ENCODE measurements at regions of chr12 and their contacts with region 1.

Region 1: DNA sequence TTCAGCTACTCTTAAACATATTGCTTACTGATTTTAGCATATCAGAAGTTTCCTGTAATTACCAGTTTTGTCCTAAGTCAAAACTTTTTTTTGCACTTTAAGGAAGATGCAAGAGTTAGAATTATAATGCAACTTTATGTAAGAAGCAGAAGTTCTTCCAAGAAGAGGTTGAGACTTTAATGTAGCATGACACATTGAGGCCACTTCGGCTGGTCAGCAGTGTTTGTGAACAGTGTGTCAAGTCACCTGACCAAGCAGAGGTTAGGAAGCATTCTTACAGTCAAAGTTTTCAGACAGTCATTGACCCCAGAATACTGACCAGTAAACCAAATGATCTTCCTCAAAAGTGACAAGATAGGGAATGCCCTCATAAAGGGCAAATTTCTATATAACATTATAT is 15.2 kb downstream of the FGFR1OP2 start:
- DNase-seq: no peak
- ATAC-seq: peak in 4 of 8 donors; percentile 34 to 75 (median 57)
- H3K4me3 ChIP-seq: no peak overlapping the region
- H3K27ac ChIP-seq: peak overlapping the region in 1 of 10 donors; percentile 75
- H3K4me1 ChIP-seq: peaks cover 0 to 37% (median 13%) of the 10 kb centered on the region in 9 donors
- H3K27me3 ChIP-seq: no peaks in the 10 kb centered on the region
- CTCF ChIP-seq: no peak

Region 2: DNA sequence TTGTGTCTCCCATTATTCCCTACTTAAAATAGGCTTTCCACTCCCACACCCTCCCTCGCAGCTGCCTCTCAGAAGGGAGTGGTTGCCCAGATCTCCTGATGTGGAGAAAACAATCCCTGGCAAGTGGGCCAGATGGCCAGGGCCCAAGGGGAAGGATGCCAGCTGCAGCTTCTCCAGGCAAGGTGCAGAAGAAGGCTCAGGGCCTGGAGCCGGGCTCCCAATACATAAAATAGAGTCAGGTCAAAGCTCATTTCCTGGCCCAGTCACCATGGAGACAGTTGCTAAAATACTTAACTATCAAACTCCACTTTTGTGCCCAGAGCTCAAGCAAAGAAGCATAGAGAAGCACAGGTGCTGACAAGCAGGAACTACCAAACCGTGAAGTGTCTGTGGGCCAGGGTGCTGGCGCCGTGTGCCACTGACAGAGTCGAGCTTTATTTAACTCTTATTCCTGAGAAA is 74.8 kb before region 1 on chr12:
- intact Hi-C with region 1: no loop called
- DNase-seq: peak; percentile 84 to 85
- ATAC-seq: peak; percentile 90 to 96 (median 94)
- H3K4me3 ChIP-seq: no peak overlapping the region
- H3K27ac ChIP-seq: peak overlapping the region in 7 of 10 donors; percentile 32 to 77 (median 64)
- H3K4me1 ChIP-seq: peaks cover 0 to 35% (median 23%) of the 10 kb centered on the region in 9 donors
- H3K27me3 ChIP-seq: no peaks in the 10 kb centered on the region
- CTCF ChIP-seq: no peak

Region 3: DNA sequence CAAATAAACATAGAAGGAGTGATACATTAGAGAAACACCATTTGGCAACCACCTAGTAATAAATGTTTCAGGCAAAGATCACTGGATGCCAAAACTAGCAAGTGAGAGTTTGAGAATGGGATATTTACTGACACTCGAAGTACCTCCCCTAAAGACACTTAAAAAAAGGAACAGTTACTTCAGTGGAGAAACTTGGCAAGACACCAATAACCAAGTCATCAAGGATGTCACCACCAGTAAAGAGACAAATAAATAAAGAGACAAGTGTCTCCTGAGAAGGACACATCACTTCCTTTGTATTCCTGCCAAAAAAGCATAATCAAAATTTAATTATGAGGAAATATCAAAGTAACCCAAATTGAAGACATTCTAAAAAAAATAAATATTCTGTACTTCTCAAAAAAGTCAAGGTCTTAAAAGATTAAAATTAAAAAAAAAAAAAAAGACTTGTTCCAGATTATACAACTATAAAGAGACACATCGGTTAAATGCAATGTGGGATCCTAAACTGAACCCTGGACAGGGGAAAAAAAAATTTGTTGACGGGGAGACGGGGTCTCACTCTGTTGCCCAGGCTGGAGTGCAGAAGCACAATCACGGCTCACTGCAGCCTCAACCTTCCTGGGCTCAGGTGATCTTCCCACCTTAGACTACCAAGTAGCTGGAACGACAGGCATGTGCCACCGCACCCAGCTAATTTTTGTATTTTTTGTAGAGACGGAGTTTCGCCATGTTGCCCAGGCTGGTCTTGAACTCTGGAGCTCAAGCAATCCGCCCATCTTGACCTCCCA is 34.4 kb after region 1 on chr12:
- intact Hi-C with region 1: loop called in 1 of 10 experiments (anchors 1 kb)
- DNase-seq: peak in 1 of 2 donors; percentile 23
- ATAC-seq: peak in 5 of 8 donors; percentile 39 to 68 (median 50)
- H3K4me3 ChIP-seq: no peak overlapping the region
- H3K27ac ChIP-seq: peak overlapping the region in 3 of 10 donors; percentile 2 to 36 (median 26)
- H3K4me1 ChIP-seq: peaks cover 0 to 14% (median 12%) of the 10 kb centered on the region in 9 donors
- H3K27me3 ChIP-seq: no peaks in the 10 kb centered on the region
- CTCF ChIP-seq: no peak